Breast epithelium (tissue), 4 donors: ENCODE measurements at regions of chr9 and their contacts with region 1.

Region 1: GRCh38 chr9:132018957-132019405 is 60.7 kb downstream of the MED27 start:
- DNase-seq: no peak
- H3K4me3 ChIP-seq: no peak overlapping the region
- H3K27ac ChIP-seq: no peak overlapping the region
- H3K4me1 ChIP-seq: peaks cover 0 to 9% of the 10 kb centered on the region in 2 donors
- H3K27me3 ChIP-seq: no peaks in the 10 kb centered on the region
- CTCF ChIP-seq: no peak
- POLR2A ChIP-seq: no peak

Region 2: DNA sequence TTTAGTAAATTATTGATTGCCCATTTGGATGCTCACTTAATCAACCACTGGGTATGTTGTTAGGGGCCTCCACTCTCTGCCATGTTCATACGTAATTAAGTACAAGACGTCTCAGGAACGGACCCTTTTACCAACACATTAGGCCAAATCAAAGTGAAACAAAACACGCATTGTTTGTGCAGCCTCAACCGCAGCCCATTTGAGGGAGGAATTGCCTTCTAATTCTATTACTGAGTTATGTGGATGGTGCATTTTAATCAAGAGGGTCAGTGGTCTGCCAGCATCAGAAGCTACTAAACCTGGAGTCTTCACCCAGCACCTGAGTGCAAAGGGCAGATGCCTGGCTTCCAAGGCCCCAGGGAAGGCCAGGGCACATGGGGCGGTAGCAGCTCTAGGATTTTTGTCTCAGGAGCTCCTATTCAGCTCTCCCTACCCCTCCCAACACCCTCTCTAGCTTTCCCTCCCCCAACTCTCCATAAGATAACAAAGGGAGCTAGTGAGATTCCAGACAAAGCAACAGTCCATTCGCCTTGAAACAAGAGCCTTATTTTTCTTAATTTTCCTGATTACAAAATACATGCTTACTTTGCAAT is 68.6 kb after region 1 on chr9:
- intact Hi-C with region 1: loop called (anchors 2 kb)
- DNase-seq: no peak
- H3K4me3 ChIP-seq: no peak overlapping the region
- H3K27ac ChIP-seq: no peak overlapping the region
- H3K4me1 ChIP-seq: no peaks in the 10 kb centered on the region
- H3K27me3 ChIP-seq: no peaks in the 10 kb centered on the region
- CTCF ChIP-seq: no peak
- POLR2A ChIP-seq: no peak

Region 3: DNA sequence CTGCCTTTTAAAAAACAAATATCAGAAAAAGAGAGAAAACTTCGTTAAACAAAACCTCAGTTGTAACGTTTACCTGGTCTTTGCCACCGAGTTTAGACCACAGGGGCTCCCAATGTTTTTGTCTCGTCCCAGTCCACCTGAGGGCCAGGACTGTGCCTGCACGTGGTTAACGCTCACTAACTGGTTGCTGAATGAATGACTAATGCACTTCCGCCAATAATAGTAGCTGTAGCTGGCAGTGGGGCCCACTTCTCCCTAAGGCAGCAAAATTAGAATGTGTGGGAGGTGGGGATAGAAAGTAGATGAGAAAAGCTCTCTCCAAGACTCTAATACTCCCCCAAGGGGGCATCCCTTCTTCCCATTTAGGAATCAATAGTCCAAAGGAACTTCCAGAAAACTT is 89.7 kb after region 1 on chr9:
- intact Hi-C with region 1: no loop called
- DNase-seq: no peak
- H3K4me3 ChIP-seq: no peak overlapping the region
- H3K27ac ChIP-seq: no peak overlapping the region
- H3K4me1 ChIP-seq: no peaks in the 10 kb centered on the region
- H3K27me3 ChIP-seq: peaks cover 0 to 25% of the 10 kb centered on the region in 2 donors
- CTCF ChIP-seq: no peak
- POLR2A ChIP-seq: no peak